Ascending aorta (tissue), 2 donors: ENCODE measurements at regions of chr15 and their contacts with region 1.

Region 1: GRCh38 chr15:52528991-52529926 is 579 bp upstream of the MYO5A start:
- DNase-seq: peak in 1 of 2 donors; percentile 85
- H3K4me3 ChIP-seq: peak overlapping the region; percentile 86 to 92
- H3K27ac ChIP-seq: peak overlapping the region; percentile 66 to 87
- H3K4me1 ChIP-seq: peaks cover 0 to 6% of the 10 kb centered on the region in 2 donors
- H3K27me3 ChIP-seq: no peaks in the 10 kb centered on the region
- CTCF ChIP-seq: peak in 1 of 3 experiments; percentile 17

Region 2: GRCh38 chr15:52261498-52262242 is 267.6 kb before region 1 on chr15:
- intact Hi-C with region 1: loop called (anchors 5 kb)
- DNase-seq: peak; percentile 67 to 89
- H3K4me3 ChIP-seq: no peak overlapping the region
- H3K27ac ChIP-seq: peak overlapping the region; percentile 65 to 81
- H3K4me1 ChIP-seq: peaks cover 0 to 14% of the 10 kb centered on the region in 2 donors
- H3K27me3 ChIP-seq: no peaks in the 10 kb centered on the region
- CTCF ChIP-seq: peak in 2 of 3 experiments; percentile 27 to 32

Region 3: GRCh38 chr15:52730173-52730572 is 200.9 kb after region 1 on chr15:
- intact Hi-C with region 1: loop called (anchors 5 kb)
- DNase-seq: no peak
- H3K4me3 ChIP-seq: no peak overlapping the region
- H3K27ac ChIP-seq: no peak overlapping the region
- H3K4me1 ChIP-seq: peaks cover 0 to 5% of the 10 kb centered on the region in 2 donors
- H3K27me3 ChIP-seq: no peaks in the 10 kb centered on the region
- CTCF ChIP-seq: no peak